ENCODE measurements at regions of chr10 and their contacts with region 1.

Region 1: DNA sequence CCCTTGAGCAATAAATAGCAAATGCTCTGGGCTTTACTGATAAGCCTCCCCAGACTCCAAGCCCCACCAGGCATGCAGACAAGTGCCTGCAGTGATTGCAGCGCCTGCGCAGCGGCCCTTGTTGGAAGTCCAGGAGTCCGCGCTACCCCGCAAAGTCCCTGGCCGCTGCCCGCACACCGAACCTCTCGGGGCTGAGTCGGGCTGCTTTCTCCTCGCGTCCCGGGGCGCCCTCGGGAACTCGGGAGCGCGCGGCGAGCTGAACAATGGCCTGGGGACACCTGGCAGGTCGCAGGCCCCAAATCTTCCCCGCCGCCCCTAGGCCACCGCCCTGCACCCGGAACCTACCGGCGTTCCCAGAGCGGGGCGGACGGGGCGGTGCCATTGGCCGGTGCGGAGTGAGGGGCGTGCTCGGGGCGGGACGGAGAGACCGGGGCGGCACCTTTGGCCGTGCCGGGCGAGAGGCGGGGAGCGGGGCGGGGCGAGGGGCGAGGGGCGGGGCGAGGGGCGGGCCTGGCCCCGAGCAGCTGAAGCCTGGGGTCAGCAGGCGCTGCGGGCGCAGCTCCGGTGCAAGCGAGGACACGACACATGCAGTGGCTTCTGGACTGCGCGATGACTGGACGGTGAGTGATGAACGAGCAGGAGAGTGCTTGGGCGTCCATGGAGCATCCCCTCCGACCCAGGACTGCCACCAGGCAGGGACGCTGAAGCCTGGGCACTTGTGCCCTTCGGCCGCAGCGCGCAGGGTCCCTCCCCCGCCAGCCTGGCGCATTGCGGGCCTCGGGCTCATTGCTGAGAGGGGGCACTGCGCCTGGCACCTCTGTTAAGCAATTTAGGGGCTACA is at the start of gene RASSF4:
- DNase-seq: peak; percentile 27
- H3K4me3 ChIP-seq: peak within 1 kb of the TSS; percentile 78
- CTCF ChIP-seq: no peak

Region 2: DNA sequence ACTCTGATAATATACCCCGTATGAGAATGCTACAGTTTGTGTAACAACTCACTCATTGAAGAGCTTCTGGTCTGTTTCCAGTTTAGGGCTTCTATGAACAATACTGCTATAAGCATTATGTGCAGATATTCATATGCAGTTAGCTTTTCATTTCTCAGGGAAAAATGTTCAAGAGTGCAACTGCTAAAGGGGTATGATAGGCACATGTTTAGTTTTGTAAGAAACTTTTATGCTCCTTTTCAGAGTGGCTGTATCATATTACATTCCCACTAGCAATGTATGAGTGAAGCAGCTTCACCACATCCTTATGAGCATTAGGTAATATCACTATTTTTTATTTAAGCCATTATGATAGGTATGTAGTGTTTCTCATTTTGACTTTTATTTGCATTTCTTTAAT is 392.0 kb before region 1 on chr10:
- in situ Hi-C with region 1: no loop called
- DNase-seq: no peak
- H3K4me3 ChIP-seq: no peak overlapping the region
- CTCF ChIP-seq: no peak

Region 3: DNA sequence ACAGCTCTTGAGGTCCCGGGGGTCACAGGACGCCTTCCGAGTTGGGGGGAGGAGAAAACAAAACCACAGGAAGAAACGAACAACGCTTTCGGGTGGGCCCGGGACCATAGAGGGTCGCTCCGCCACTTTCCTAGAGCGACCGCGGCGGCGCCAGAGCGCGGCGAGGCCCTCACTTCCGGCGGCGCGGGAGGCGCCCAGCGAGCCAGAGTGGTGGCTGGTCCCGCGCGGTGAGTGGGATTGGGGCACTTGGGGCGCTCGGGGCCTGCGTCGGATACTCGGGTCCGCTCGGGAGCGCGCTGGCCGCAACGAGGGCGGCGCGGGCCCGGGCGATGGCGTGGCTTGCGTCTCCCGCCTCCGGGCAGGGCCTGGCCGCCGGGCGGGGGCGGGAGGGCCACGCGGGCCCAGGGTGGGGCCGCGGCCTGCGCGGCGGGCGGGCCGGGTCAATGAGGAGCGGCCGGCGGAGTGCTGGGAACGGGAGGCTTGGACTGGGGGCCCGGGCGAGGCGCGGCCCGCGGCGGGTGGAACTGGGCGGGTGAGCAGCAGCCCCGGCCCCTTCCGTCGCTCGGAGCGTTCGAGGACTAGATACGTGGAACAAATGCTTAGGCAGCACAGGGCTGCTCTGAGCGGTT is 41.4 kb after region 1 on chr10 and contains the start of gene ZNF22:
- in situ Hi-C with region 1: loop called (anchors 5 kb)
- DNase-seq: no peak
- H3K4me3 ChIP-seq: peak within 1 kb of the TSS; percentile 53
- CTCF ChIP-seq: no peak

Region 4: GRCh38 chr10:45023426-45023825 is 64.0 kb after region 1 on chr10:
- in situ Hi-C with region 1: no loop called
- DNase-seq: no peak
- H3K4me3 ChIP-seq: no peak overlapping the region
- CTCF ChIP-seq: no peak

Measured in astrocyte of the cerebellum (primary cell).